ENCODE measurements at regions of chr9 and their contacts with region 1.

Region 1: DNA sequence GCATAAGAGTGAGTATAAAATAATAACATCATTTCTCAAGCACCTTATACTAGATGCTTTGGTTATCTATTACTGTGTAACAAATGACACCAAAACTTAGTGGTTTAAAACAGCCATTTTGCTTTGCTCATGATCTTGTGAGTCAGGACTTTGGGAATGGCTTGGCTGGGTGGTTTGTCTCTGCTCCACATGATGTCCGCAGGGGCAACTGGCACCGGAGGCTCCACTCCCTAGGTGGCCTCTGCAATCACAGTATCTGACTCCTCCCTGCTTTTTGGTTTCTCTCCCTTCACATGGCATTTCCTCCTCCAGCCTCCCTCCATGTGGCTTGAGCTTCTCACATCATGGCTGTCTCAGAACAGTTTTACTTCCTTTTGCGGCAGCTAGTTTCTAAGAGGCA is 259.5 kb downstream of the GAS1 start:
- DNase-seq: no peak
- H3K4me3 ChIP-seq: no peak overlapping the region
- H3K27ac ChIP-seq: no peak overlapping the region
- H3K4me1 ChIP-seq: peaks cover 7% of the 10 kb centered on the region
- H3K27me3 ChIP-seq: no peaks in the 10 kb centered on the region
- CTCF ChIP-seq: no peak
- POLR2A ChIP-seq: no peak

Region 2: DNA sequence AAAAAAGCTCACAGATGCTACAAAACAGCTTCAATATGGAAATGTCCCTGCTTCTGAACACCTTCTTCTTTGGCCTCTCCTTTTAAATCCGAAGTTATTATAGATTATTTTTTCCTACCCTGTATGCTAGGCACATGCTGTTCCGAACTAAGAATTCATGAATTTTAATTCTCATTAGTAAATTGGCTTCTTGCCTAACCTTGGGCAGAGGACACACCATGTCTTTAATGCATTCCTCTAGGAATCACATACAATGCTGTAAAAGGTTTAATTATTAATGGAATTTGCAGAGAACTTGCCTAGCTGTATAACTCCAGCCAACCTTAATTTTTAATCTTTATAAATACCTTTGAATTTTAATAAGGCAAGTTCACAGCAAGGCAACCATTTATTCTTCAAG is 1783.8 kb before region 1 on chr9:
- intact Hi-C with region 1: loop called (anchors 5 kb)
- DNase-seq: no peak
- H3K4me3 ChIP-seq: no peak overlapping the region
- H3K27ac ChIP-seq: no peak overlapping the region
- H3K4me1 ChIP-seq: no peaks in the 10 kb centered on the region
- H3K27me3 ChIP-seq: no peaks in the 10 kb centered on the region
- CTCF ChIP-seq: no peak
- POLR2A ChIP-seq: no peak

Region 3: DNA sequence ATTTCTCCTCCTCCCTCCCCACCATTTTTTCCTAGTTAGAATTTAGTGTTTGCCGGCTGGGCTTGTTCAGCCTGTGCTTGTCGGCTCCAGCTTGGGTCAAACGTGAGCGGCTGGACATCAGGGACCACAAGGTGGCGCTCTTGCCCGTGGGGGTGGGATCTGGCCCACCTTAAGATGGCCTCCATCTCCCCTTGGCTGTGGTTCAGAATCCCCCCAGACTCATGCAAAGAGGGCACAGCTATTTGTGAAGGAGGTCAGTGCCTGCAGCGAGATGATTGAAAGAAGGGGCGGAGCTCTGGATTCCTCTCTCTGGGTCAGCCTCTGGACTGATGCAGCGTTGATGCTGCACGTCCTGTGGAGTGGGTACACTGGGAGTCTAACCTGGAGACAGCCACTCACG is 50.3 kb before region 1 on chr9:
- intact Hi-C with region 1: no loop called
- DNase-seq: no peak
- H3K4me3 ChIP-seq: no peak overlapping the region
- H3K27ac ChIP-seq: no peak overlapping the region
- H3K4me1 ChIP-seq: no peaks in the 10 kb centered on the region
- H3K27me3 ChIP-seq: no peaks in the 10 kb centered on the region
- CTCF ChIP-seq: peak in 1 of 3 experiments; percentile 23
- POLR2A ChIP-seq: no peak

Region 4: GRCh38 chr9:86925686-86926085 is 237.9 kb after region 1 on chr9:
- intact Hi-C with region 1: no loop called
- DNase-seq: no peak
- H3K4me3 ChIP-seq: no peak overlapping the region
- H3K27ac ChIP-seq: no peak overlapping the region
- H3K4me1 ChIP-seq: no peaks in the 10 kb centered on the region
- H3K27me3 ChIP-seq: no peaks in the 10 kb centered on the region
- CTCF ChIP-seq: no peak
- POLR2A ChIP-seq: no peak

Measured in vagina (tissue), 2 donors.